OCI-LY7 (cell line): ENCODE measurements at regions of chr1 and their contacts with region 1.

Region 1: DNA sequence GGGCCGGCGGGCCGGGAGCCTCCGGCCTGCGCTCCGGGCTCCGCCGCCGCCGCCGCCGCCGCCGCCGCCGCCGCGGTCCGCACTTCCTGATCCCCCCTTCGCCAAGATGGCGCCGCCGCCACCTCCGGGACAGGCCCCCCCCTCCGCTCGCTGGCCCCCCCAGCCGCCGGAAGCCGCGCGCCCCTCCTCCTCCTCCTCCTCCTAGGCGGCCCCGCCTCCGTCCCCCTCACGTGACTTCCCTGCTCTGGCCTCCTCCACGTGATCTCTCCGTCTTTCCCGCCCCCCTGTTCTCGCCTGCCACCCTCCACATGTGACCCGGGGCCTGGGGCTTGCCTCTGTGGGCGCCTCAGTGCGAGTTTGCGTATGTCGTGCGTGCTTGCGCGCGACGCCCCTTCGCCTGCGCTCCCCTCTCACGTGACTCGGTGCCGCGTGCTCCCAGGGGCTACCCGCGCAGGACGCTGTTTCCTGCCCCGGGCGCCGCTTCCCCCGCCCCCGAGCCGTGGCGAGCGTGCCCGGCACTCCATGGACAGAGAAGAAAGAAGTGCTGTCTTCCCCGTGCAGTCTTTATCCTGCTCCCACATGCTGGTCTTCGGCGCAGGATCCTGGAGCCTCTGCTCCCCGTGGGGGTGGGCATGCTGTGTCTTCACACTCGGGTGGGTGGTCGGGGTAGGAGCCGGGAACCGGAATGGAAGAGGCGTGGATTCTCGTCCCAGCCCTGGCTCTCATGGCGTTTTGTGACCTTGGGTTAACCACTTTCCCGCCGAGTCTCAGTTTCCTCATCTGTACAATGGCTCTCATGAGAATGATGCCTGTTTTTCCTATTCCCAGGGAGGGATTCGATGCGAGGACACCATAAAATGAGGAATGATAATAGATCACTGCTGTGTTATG is at the start of gene UBE2Q1:
- DNase-seq: peak; percentile 99
- H3K4me3 ChIP-seq: peak within 1 kb of the TSS; percentile 96
- H3K27ac ChIP-seq: peak within 1 kb of the TSS; percentile 63
- H3K4me1 ChIP-seq: peaks cover 22% of the 10 kb centered on the region
- CTCF ChIP-seq: no peak
- total RNA-seq, gene UBE2Q1: 34.6 and 54.0 TPM in 2 replicates

Region 2: GRCh38 chr1:154371436-154371835 is 187.4 kb before region 1 on chr1:
- CTCF ChIA-PET with region 1: no interaction called
- POLR2A ChIA-PET with region 1: no interaction called
- intact Hi-C with region 1: no loop called
- DNase-seq: no peak
- H3K4me3 ChIP-seq: no peak overlapping the region
- H3K27ac ChIP-seq: no peak overlapping the region
- H3K4me1 ChIP-seq: no peaks in the 10 kb centered on the region
- CTCF ChIP-seq: no peak

Region 3: GRCh38 chr1:154463512-154463990 is 95.3 kb before region 1 on chr1:
- CTCF ChIA-PET with region 1: no interaction called
- POLR2A ChIA-PET with region 1: no interaction called
- intact Hi-C with region 1: no loop called
- DNase-seq: no peak
- H3K4me3 ChIP-seq: no peak overlapping the region
- H3K27ac ChIP-seq: no peak overlapping the region
- H3K4me1 ChIP-seq: no peaks in the 10 kb centered on the region
- CTCF ChIP-seq: no peak

Region 4: GRCh38 chr1:154607609-154608396 is 49.0 kb after region 1 on chr1 and contains the start of gene ADAR:
- CTCF ChIA-PET with region 1: no interaction called
- POLR2A ChIA-PET with region 1: interaction called, 6 read pairs
- intact Hi-C with region 1: loop called (anchors 2 kb)
- DNase-seq: peak; percentile 96
- H3K4me3 ChIP-seq: peak within 1 kb of the TSS; percentile 81
- H3K27ac ChIP-seq: peak within 1 kb of the TSS; percentile 81
- H3K4me1 ChIP-seq: peaks cover 43% of the 10 kb centered on the region
- CTCF ChIP-seq: peak; percentile 42; the same call in 1 of the 2 replicates
- total RNA-seq, gene ADAR: 87.8 and 90.2 TPM in 2 replicates

Region 5: GRCh38 chr1:154669464-154670282 is 110.9 kb after region 1 on chr1:
- CTCF ChIA-PET with region 1: interaction called, 3 read pairs
- POLR2A ChIA-PET with region 1: no interaction called
- intact Hi-C with region 1: loop called (anchors 1 kb)
- DNase-seq: peak; percentile 89
- H3K4me3 ChIP-seq: no peak overlapping the region
- H3K27ac ChIP-seq: no peak overlapping the region
- H3K4me1 ChIP-seq: peaks cover 8% of the 10 kb centered on the region
- CTCF ChIP-seq: peak; percentile 97

Region 6: DNA sequence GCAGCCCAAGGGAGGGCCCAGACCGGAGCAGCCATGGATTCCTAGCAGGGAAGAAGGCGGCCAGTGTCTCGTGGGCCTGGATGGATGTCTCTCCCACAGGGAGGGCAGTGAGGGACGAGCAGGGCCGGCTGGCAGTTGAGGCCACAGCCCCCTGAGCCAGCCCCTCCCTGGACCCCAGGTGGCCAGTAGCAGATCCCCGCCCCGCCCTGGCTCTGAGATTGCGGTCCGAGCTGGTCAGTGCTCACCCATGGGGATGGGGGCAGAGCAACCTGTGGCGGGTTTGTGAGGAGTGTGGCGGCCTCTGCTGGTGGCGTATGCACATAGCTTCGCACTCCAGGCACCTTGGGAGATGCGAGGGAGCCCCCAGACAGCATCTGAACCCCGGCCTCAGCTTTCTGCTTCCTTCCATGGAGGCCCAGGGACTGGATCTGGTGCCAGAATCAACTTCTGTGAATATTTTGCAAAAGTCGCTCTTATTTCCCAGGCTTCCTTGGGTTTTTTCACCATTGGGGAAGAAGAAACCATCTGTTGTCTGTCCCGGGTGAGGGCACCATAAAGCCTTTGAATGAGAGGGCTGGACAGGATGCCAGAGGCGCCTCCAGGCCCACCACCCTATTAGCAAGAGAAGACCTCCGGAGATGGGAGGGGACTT is 319.7 kb after region 1 on chr1:
- CTCF ChIA-PET with region 1: no interaction called
- POLR2A ChIA-PET with region 1: interaction called, 3 read pairs
- intact Hi-C with region 1: loop called (anchors 1 kb)
- DNase-seq: peak; percentile 83
- H3K4me3 ChIP-seq: no peak overlapping the region
- H3K27ac ChIP-seq: no peak overlapping the region
- H3K4me1 ChIP-seq: peaks cover 3% of the 10 kb centered on the region
- CTCF ChIP-seq: peak; percentile 96

Region 7: GRCh38 chr1:155084722-155085503 is 526.1 kb after region 1 on chr1:
- CTCF ChIA-PET with region 1: no interaction called
- POLR2A ChIA-PET with region 1: no interaction called
- intact Hi-C with region 1: loop called (anchors 1 kb)
- DNase-seq: peak; percentile 94
- H3K4me3 ChIP-seq: peak overlapping the region; percentile 81
- H3K27ac ChIP-seq: peak overlapping the region; percentile 87
- H3K4me1 ChIP-seq: peaks cover 45% of the 10 kb centered on the region
- CTCF ChIP-seq: peak; percentile 87